ENCODE measurements at regions of chr4 and their contacts with region 1.

Region 1: GRCh38 chr4:133720001-133720400 is 481.6 kb downstream of the PABPC4L start:
- DNase-seq: no peak
- H3K4me3 ChIP-seq: no peak overlapping the region
- H3K27ac ChIP-seq: no peak overlapping the region
- H3K4me1 ChIP-seq: no peaks in the 10 kb centered on the region
- H3K27me3 ChIP-seq: no peaks in the 10 kb centered on the region
- CTCF ChIP-seq: no peak

Region 2: GRCh38 chr4:133347409-133347808 is 372.6 kb before region 1 on chr4:
- intact Hi-C with region 1: no loop called
- DNase-seq: no peak
- H3K4me3 ChIP-seq: no peak overlapping the region
- H3K27ac ChIP-seq: no peak overlapping the region
- H3K4me1 ChIP-seq: no peaks in the 10 kb centered on the region
- H3K27me3 ChIP-seq: no peaks in the 10 kb centered on the region
- CTCF ChIP-seq: no peak

Region 3: GRCh38 chr4:133759428-133759827 is 39.4 kb after region 1 on chr4:
- intact Hi-C with region 1: loop called (anchors 5 kb)
- DNase-seq: no peak
- H3K4me3 ChIP-seq: no peak overlapping the region
- H3K27ac ChIP-seq: peak overlapping the region in 1 of 2 donors; percentile 5
- H3K4me1 ChIP-seq: peaks cover 0 to 6% of the 10 kb centered on the region in 2 donors
- H3K27me3 ChIP-seq: no peaks in the 10 kb centered on the region
- CTCF ChIP-seq: no peak

Measured in ascending aorta (tissue), 2 donors.